ENCODE measurements at regions of chr19 and their contacts with region 1.

Region 1: GRCh38 chr19:662962-663681 is at the start of gene RNF126:
- DNase-seq: peak; percentile 95
- H3K4me3 Mint-ChIP-seq: peak within 1 kb of the TSS; percentile 99
- H3K27ac Mint-ChIP-seq: peak within 1 kb of the TSS; percentile 98
- H3K4me1 Mint-ChIP-seq: peaks cover 46% of the 10 kb centered on the region
- H3K27me3 Mint-ChIP-seq: peaks cover 2% of the 10 kb centered on the region
- total RNA-seq, gene RNF126: 80.6 to 82.2 TPM

Region 2: DNA sequence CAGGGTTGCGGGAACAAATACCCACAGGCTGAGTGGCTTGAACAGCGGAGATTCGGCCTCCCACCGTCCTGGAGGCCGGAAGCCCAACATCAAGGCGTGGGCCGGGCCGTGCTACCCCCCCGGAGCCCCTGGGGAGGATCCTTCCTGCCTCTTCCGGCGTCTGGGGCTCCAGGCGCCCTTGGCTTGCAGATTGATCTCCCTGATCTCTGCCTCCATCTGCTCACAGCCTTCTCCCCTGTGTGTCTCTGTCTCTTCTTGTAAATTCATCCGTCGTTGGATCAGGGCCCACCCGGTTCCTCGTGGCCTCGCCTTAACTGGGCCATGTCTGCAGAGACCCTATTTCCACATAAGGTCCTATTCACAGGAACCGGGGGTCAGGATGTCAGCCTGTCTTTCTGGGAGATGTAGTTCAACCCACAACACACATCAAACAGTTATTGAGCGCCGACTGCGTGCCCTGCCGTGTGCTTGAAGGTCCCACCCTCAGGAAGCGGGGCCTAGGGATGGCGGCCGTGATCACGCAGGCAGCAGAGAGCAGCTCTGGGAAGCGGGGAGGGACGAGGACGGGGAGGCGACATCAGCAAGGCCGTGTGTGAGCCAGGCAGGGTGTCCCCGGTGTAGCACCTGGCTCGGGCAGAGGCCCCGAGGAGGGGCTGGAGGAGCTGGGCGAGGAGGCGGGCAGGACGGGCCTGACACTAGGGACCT is 52.2 kb before region 1 on chr19:
- CTCF ChIA-PET with region 1: no interaction called
- POLR2A ChIA-PET with region 1: interaction called, 11 read pairs
- DNase-seq: peak; percentile 75
- H3K4me3 Mint-ChIP-seq: peak overlapping the region; percentile 91
- H3K27ac Mint-ChIP-seq: peak overlapping the region; percentile 99
- H3K4me1 Mint-ChIP-seq: peaks cover 29% of the 10 kb centered on the region
- H3K27me3 Mint-ChIP-seq: no peaks in the 10 kb centered on the region

Region 3: DNA sequence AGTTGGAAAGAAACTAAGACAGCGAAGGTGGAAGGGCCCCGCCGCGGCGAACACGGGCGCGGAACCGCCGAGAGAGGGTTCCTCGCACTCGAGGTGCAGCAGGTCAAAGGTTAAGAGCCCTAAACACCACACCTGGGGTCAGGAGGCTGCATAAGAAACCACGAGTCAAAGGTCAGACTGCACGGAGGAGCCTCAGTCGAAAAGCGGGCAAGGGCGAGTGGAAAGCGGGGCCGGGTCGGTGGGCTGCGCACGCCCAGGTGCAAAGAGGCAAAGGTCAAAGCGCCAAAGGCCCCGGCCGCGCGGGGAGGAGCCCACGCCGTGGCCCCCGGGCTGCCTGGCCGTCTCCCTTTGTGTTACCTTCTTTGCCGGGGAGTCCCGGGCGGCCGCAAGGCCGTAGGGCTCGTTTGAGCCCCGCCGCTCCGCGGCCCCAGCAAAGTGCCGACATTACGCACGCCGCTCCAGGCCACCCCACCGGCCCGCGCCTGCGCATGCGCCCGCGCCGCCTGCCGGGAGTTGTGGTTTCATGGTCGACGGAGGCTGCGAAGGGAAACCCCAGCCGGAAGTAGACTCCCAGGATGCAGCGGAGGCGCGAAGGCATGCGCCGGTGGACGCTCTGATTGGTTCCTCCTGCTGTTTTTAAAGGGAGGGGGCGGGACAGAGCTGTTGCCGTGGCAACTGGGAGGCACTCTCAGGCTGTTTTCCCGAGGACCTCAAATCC is 29.9 kb before region 1 on chr19 and contains the start of gene POLRMT:
- CTCF ChIA-PET with region 1: interaction called, 3 read pairs
- POLR2A ChIA-PET with region 1: interaction called, 15 read pairs
- DNase-seq: peak; percentile 98
- H3K4me3 Mint-ChIP-seq: peak within 1 kb of the TSS; percentile 95
- H3K27ac Mint-ChIP-seq: peak within 1 kb of the TSS; percentile 89
- H3K4me1 Mint-ChIP-seq: peaks cover 37% of the 10 kb centered on the region
- H3K27me3 Mint-ChIP-seq: no peaks in the 10 kb centered on the region
- total RNA-seq, gene POLRMT: 44.8 to 45.1 TPM

Region 4: DNA sequence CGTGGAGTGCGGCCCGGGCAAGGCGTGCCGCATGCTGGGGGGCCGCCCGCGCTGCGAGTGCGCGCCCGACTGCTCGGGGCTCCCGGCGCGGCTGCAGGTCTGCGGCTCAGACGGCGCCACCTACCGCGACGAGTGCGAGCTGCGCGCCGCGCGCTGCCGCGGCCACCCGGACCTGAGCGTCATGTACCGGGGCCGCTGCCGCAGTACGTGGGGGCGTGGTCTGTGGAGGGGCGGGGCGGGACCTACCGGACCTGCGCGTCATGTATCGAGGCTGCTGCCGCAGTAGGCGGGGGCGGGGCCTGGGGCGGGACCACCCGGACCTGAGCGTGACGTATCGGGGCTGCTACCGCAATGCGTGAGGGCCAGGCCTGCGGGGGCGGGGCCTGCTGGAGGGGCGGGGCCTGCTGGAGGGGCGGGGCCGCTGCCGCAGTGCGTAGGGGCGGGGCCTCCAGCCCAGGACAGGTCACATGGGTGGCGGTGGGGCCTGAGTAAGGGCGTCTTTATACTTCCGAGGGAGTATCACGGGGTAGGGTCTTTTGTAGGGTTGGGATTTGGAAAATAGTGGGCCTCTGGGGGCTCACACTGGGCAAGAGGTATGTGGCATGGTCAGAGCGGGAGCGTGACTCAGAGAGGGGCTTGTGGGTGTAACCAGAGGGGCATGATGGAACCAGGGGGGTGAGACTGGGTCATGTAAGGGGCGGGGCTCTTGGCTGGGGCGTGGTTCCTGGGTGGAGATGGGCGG is 17.3 kb after region 1 on chr19:
- CTCF ChIA-PET with region 1: interaction called, 6 read pairs
- POLR2A ChIA-PET with region 1: interaction called, 18 read pairs
- DNase-seq: peak; percentile 100
- H3K4me3 Mint-ChIP-seq: peak overlapping the region; percentile 82
- H3K27ac Mint-ChIP-seq: peak overlapping the region; percentile 99
- H3K4me1 Mint-ChIP-seq: peaks cover 4% of the 10 kb centered on the region
- H3K27me3 Mint-ChIP-seq: peaks cover 8% of the 10 kb centered on the region